ENCODE measurements at regions of chr17 and their contacts with region 1.

Region 1: DNA sequence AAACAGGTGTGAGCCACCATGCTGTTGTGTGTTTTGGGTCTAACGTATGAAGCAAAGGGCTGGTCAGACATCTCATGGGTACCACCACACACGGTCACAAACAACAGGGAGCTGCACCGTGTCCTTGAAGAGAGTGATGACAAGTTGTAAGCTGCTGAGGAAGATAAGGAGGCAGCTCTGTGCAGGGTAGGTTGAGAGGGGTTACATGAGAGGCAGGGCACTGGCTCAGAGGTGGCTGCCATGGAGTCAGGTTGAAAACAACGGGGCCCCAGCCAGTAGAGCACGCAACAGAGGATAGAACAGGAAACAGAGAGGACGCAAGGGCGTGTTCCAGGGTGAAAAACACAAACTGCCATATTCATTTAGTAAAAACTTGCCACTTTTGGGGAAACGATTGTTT is 52.2 kb downstream of the TRARG1 start:
- DNase-seq: no peak

Region 2: DNA sequence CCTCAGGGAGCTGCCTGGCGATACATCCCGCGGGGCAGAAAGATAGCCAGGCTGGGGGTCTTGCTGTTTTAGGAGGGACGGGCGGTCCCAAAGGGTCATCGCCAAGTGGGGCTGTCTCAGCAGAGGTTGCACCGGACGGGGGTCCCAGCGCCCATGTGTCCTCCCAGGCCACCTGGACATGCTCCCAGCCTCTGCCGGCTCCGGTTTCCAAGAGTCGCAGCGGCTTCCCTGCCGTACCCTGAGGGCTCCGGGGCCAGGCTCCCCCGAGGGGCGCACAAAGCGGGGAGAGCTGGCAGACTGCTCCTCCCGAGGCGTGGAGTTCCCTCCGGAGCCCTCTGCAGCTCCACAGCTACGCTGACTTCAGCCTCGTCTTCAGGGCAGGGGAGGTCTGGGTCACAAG is 51.1 kb before region 1 on chr17:
- CTCF ChIA-PET with region 1: interaction called, 14 read pairs
- POLR2A ChIA-PET with region 1: no interaction called
- DNase-seq: no peak

Region 3: DNA sequence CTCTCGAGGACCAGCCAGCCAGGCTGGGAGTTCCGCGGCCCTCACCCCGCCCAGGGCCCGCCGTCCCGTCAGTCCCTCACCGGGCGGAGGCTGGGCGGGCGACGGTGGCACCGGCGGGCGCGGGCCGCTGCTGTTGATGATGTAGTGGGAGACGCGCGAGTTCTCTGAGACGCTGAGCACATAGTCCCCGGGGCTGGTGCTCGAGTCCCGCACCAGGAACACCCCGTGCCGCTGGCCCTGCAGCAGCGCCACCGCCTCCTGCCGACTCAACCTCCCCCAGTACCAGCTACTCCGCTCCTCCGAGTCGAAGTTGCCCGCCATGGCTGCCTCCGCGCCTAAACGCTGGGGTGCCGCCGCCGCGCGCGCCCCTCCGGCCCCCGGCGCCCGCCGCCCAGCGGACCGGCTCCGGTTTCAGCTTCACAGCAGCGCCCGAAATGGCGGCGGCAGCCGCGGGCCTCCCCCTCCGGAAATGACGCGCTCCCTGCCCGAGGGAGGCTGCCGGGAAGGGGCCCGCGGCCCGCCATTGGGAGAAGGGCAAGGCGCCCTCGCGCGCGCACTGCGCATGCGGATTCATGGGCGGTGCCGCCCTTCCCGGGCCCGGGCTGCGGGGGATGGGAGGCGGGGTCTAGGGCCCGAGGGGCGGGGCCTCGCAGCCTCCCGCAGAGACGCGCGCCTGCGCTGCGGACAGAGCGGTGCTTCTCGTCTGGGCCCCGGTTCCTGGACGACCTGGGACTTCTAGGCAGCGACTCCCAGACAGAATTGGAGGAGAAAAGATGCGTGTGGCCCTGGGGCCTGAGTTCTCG is 124.3 kb after region 1 on chr17 and contains the start of gene CRK:
- CTCF ChIA-PET with region 1: no interaction called
- POLR2A ChIA-PET with region 1: no interaction called
- DNase-seq: peak; percentile 99